Transverse colon (tissue), 4 donors: ENCODE measurements at regions of chr5 and their contacts with region 1.

Region 1: GRCh38 chr5:60362158-60362557 is 337.8 kb downstream of the DEPDC1B start:
- DNase-seq: no peak
- H3K4me3 ChIP-seq: no peak overlapping the region
- H3K27ac ChIP-seq: no peak overlapping the region
- H3K4me1 ChIP-seq: no peaks in the 10 kb centered on the region
- H3K27me3 ChIP-seq: no peaks in the 10 kb centered on the region
- CTCF ChIP-seq: no peak
- EP300 ChIP-seq: no peak
- POLR2A ChIP-seq: no peak

Region 2: GRCh38 chr5:59608745-59609144 is 753.4 kb before region 1 on chr5:
- in situ Hi-C with region 1: no loop called
- intact Hi-C with region 1: loop called (anchors 10 kb)
- DNase-seq: no peak
- H3K4me3 ChIP-seq: no peak overlapping the region
- H3K27ac ChIP-seq: no peak overlapping the region
- H3K4me1 ChIP-seq: peaks cover 0 to 5% (median 0%) of the 10 kb centered on the region in 4 donors
- H3K27me3 ChIP-seq: no peaks in the 10 kb centered on the region
- CTCF ChIP-seq: no peak
- EP300 ChIP-seq: no peak
- POLR2A ChIP-seq: no peak

Region 3: DNA sequence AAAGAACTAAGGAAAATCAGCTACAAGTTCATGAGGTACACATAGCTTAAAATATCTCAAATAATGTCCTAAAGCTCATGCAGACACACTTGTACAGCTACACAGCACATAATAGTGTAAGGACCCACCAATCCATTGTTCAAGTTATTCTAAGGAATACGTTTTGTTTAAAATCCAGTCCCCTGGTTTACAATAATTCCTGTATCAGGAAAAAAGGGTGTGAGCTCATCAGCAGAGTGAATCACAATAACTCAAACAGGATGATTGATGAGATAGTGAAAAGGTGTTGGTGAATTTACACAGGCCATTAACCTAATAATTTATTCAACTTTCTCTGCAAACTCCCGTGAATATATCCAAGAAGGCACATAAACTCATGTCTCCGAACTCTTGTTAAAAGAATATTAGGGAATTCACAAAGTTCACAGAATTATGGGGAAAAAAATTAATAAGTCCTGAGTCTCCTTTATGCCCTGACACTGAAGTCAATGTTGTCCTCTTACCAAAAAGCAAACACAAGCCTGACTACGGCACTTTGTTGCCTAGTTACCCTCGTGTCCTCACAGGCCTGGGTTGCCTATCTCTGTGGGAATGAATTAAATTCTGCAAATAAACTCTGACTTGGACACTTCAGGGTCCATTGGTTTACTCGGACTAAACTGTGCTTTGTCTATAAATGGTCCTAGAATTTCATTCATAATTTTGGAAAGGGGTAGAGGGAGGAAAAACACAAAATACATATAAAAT is 325.8 kb before region 1 on chr5:
- in situ Hi-C with region 1: no loop called
- intact Hi-C with region 1: no loop called
- DNase-seq: no peak
- H3K4me3 ChIP-seq: no peak overlapping the region
- H3K27ac ChIP-seq: no peak overlapping the region
- H3K4me1 ChIP-seq: no peaks in the 10 kb centered on the region
- H3K27me3 ChIP-seq: no peaks in the 10 kb centered on the region
- CTCF ChIP-seq: no peak
- EP300 ChIP-seq: no peak
- POLR2A ChIP-seq: no peak

Region 4: GRCh38 chr5:60340965-60341471 is 21.1 kb before region 1 on chr5:
- in situ Hi-C with region 1: no loop called
- intact Hi-C with region 1: loop called (anchors 1 kb)
- DNase-seq: no peak
- H3K4me3 ChIP-seq: no peak overlapping the region
- H3K27ac ChIP-seq: no peak overlapping the region
- H3K4me1 ChIP-seq: no peaks in the 10 kb centered on the region
- H3K27me3 ChIP-seq: no peaks in the 10 kb centered on the region
- CTCF ChIP-seq: no peak
- EP300 ChIP-seq: no peak
- POLR2A ChIP-seq: no peak